CD8-positive, alpha-beta T cell (primary cell): ENCODE measurements at regions of chr7 and their contacts with region 1.

Region 1: GRCh38 chr7:31134246-31135188 is 82.4 kb downstream of the ADCYAP1R1 start:
- DNase-seq: peak in 7 of 9 experiments; percentile 19 to 57 (median 36)
- ATAC-seq: no peak
- H3K4me3 ChIP-seq: no peak overlapping the region
- H3K4me3 Mint-ChIP-seq: no peak overlapping the region
- H3K27ac ChIP-seq: no peak overlapping the region
- H3K27ac Mint-ChIP-seq: no peak overlapping the region
- H3K4me1 ChIP-seq: no peaks in the 10 kb centered on the region
- H3K4me1 Mint-ChIP-seq: peaks cover 4% of the 10 kb centered on the region
- H3K27me3 ChIP-seq: no peaks in the 10 kb centered on the region
- H3K27me3 Mint-ChIP-seq: peaks cover 2% of the 10 kb centered on the region
- CTCF ChIP-seq: peak; percentile 59

Region 2: GRCh38 chr7:31146030-31146429 is 11.5 kb after region 1 on chr7:
- CTCF ChIA-PET with region 1: interaction called, 17 read pairs
- POLR2A ChIA-PET with region 1: no interaction called
- intact Hi-C with region 1: no loop called
- DNase-seq: no peak
- ATAC-seq: no peak
- H3K4me3 ChIP-seq: no peak overlapping the region
- H3K4me3 Mint-ChIP-seq: no peak overlapping the region
- H3K27ac ChIP-seq: no peak overlapping the region
- H3K27ac Mint-ChIP-seq: no peak overlapping the region
- H3K4me1 ChIP-seq: no peaks in the 10 kb centered on the region
- H3K4me1 Mint-ChIP-seq: no peaks in the 10 kb centered on the region
- H3K27me3 ChIP-seq: peaks cover 0 to 5% of the 10 kb centered on the region in 2 experiments
- H3K27me3 Mint-ChIP-seq: peaks cover 23% of the 10 kb centered on the region
- CTCF ChIP-seq: no peak

Region 3: GRCh38 chr7:32347244-32347828 is 1212.8 kb after region 1 on chr7:
- CTCF ChIA-PET with region 1: no interaction called
- POLR2A ChIA-PET with region 1: no interaction called
- intact Hi-C with region 1: loop called in 1 of 2 experiments (anchors 10 kb)
- DNase-seq: peak in 3 of 9 experiments; percentile 7 to 13 (median 11)
- ATAC-seq: no peak
- H3K4me3 ChIP-seq: no peak overlapping the region
- H3K4me3 Mint-ChIP-seq: no peak overlapping the region
- H3K27ac ChIP-seq: no peak overlapping the region
- H3K27ac Mint-ChIP-seq: no peak overlapping the region
- H3K4me1 ChIP-seq: no peaks in the 10 kb centered on the region
- H3K4me1 Mint-ChIP-seq: no peaks in the 10 kb centered on the region
- H3K27me3 ChIP-seq: no peaks in the 10 kb centered on the region
- H3K27me3 Mint-ChIP-seq: peaks cover 4% of the 10 kb centered on the region
- CTCF ChIP-seq: no peak